A549 (cell line): ENCODE measurements at regions of chr20 and their contacts with region 1.

Region 1: DNA sequence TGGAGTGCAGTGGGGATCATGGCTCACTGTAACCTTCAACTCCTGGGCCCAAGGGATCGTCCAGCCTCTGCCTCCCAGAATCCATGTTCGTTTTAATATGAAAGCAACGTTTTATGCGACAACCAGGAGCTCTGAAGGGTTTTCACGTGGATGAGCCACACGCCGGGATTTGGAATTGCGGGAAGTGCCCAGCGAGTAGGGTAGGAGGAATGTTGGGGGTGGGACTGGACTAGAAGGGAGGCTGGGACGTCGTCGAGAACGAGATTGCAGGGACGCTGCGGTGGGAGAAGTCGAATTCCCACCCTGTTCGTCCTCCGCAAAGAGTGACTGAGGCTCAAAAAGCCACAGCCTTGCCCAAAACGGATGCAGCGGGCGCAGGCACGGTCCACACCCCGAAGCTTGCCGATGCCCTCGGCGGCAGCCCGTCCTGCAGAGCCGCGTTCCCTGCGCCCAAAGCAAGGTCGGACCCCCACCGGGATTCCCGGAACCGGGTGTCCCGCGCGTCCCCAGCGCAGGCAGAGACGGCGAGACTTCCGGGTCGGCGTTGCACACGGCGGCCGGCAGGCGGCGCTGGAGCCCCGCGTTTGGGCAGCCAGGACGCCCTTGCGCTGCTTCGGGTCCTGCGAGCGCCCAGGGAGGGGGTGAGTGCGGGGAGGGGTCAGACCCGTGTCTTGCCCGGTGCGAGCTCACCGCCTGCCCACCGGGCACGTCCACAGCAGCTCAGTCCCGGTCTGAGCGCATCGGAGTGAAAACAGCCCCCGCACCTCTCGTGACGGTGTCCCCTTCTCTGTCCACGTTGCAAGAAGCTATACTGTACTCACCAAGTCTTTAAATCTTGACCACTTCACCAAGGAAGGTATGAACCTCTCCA is 87.8 kb downstream of the DHX35 start:
- DNase-seq: peak; percentile 48 to 71
- ATAC-seq: peak; percentile 71 to 90
- H3K4me3 ChIP-seq: peak overlapping the region; percentile 58
- H3K27ac ChIP-seq: peak overlapping the region; percentile 80 to 93
- H3K4me1 ChIP-seq: 0 out of 3 replicates have a peak, but pooled peaks cover 4% of the 10 kb centered on the region
- CTCF ChIP-seq: peak; percentile 92
- EP300 ChIP-seq: no peak
- POLR2A ChIP-seq: peak; percentile 80
- RAD21 ChIP-seq: peak; percentile 82 to 93

Region 2: DNA sequence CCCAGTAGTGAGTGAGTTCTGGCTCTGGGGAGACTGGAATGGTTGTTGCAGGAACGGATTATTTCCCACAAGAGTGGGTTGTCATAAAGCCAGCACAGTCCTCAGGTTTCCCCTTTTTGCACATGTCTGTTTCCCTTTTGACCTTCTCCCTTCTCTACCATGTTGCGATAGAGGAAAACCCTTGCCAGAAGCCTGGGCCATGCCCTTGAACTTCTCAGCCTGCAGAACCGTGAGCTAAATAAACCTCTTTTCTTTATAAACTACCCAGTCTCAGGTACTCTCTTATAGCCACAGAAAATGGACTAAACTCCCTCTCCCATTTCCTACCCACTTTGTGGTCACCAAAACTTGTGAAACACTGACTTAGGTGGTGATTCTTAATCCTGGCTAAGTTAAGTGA is 251.7 kb before region 1 on chr20:
- CTCF ChIA-PET with region 1: no interaction called
- POLR2A ChIA-PET with region 1: no interaction called
- DNase-seq: no peak
- ATAC-seq: no peak
- H3K4me3 ChIP-seq: no peak overlapping the region
- H3K27ac ChIP-seq: no peak overlapping the region
- H3K4me1 ChIP-seq: no peaks in the 10 kb centered on the region
- CTCF ChIP-seq: no peak
- EP300 ChIP-seq: no peak
- POLR2A ChIP-seq: no peak
- RAD21 ChIP-seq: no peak

Region 3: GRCh38 chr20:38926142-38926933 is 123.6 kb before region 1 on chr20 and contains the start of gene FAM83D:
- CTCF ChIA-PET with region 1: interaction called, 60 read pairs
- POLR2A ChIA-PET with region 1: interaction called, 8 read pairs
- DNase-seq: peak; percentile 99
- ATAC-seq: peak; percentile 93 to 96
- H3K4me3 ChIP-seq: peak within 1 kb of the TSS; percentile 94
- H3K27ac ChIP-seq: peak within 1 kb of the TSS; percentile 80 to 93
- H3K4me1 ChIP-seq: peaks cover 26% of the 10 kb centered on the region; the same call in 2 of the 3 replicates
- CTCF ChIP-seq: no peak; the same call in 2 of the 3 replicates
- EP300 ChIP-seq: no peak
- POLR2A ChIP-seq: peak; percentile 98
- RAD21 ChIP-seq: peak; percentile 58 to 71; a peak in 4 of 5 replicates
- polyA plus RNA-seq, gene FAM83D: 53.5 and 57.1 TPM in 2 replicates

Region 4: DNA sequence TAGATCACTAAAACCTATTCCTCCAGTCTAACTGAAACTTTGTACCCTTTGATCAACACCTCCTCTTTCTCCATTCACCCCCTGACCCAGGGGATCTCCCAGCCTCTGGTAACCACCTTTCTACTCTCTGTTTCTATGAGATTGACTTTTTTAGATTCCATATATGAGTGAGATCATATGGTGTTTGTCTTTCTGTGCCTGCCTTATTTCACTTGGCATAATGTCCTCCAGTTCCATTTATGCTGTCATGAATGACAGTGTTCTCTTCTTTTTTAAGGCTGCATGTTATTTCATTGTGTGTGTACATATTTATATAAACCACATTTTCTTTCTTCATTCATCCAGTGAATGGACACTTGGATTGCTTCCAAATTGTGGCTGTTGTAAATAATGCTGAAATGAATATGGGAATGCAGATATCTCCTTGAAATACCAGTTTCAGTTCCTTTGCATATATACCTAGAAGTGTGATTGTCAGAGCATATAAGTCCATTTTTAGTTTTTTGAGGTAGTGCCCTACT is 30.1 kb before region 1 on chr20:
- CTCF ChIA-PET with region 1: interaction called, 18 read pairs
- POLR2A ChIA-PET with region 1: no interaction called
- DNase-seq: no peak
- ATAC-seq: no peak
- H3K4me3 ChIP-seq: no peak overlapping the region
- H3K27ac ChIP-seq: no peak overlapping the region
- H3K4me1 ChIP-seq: no peaks in the 10 kb centered on the region
- CTCF ChIP-seq: no peak
- EP300 ChIP-seq: no peak
- POLR2A ChIP-seq: no peak
- RAD21 ChIP-seq: no peak

Region 5: DNA sequence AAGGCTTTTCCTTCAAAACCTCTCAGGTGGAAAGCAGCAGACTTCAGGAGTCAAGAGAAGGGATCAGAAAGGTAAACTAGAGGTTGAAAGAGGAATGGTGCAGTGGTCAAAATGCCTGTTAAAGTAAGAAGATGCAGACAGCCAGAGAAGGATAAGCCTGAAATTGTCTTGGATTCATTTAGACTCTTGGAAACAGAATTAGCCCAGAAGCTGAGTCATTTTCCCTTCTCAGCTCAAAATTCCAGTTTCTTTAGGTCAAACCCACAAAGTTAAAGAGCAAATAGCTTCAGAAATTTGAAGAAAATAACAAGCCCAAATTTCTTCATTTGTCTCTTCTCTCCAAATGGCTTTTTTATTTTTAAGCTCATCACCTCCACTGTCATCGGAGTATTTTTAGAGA is 13.9 kb before region 1 on chr20:
- CTCF ChIA-PET with region 1: interaction called, 112 read pairs
- POLR2A ChIA-PET with region 1: no interaction called
- DNase-seq: no peak
- ATAC-seq: no peak
- H3K4me3 ChIP-seq: no peak overlapping the region
- H3K27ac ChIP-seq: no peak overlapping the region
- H3K4me1 ChIP-seq: no peaks in the 10 kb centered on the region
- CTCF ChIP-seq: no peak
- EP300 ChIP-seq: no peak
- POLR2A ChIP-seq: no peak
- RAD21 ChIP-seq: no peak

Region 6: GRCh38 chr20:39081255-39081654 is 31.3 kb after region 1 on chr20:
- CTCF ChIA-PET with region 1: interaction called, 332 read pairs
- POLR2A ChIA-PET with region 1: interaction called, 3 read pairs
- DNase-seq: peak; percentile 72 to 84
- ATAC-seq: peak; percentile 91 to 96
- H3K4me3 ChIP-seq: no peak overlapping the region
- H3K27ac ChIP-seq: no peak overlapping the region
- H3K4me1 ChIP-seq: no peaks in the 10 kb centered on the region
- CTCF ChIP-seq: peak; percentile 69
- EP300 ChIP-seq: no peak
- POLR2A ChIP-seq: no peak
- RAD21 ChIP-seq: peak; percentile 39 to 50; a peak in 3 of 5 replicates

Region 7: GRCh38 chr20:39453890-39454289 is 404.0 kb after region 1 on chr20:
- CTCF ChIA-PET with region 1: no interaction called
- POLR2A ChIA-PET with region 1: no interaction called
- DNase-seq: no peak
- ATAC-seq: no peak
- H3K4me3 ChIP-seq: no peak overlapping the region
- H3K27ac ChIP-seq: no peak overlapping the region
- H3K4me1 ChIP-seq: no peaks in the 10 kb centered on the region
- CTCF ChIP-seq: no peak
- EP300 ChIP-seq: no peak
- POLR2A ChIP-seq: no peak
- RAD21 ChIP-seq: no peak